Activated B cell treated with CpG ODN at 0.5 μM for 24 hours (primary cell): ENCODE measurements at regions of chr17 and their contacts with region 1.

Region 1: GRCh38 chr17:42798383-42799380 is at the starts of genes CNTD1 and COA3:
- DNase-seq: peak; percentile 69
- ATAC-seq: peak; percentile 100
- H3K4me3 Mint-ChIP-seq: peak within 1 kb of the TSS; percentile 97
- H3K27ac Mint-ChIP-seq: peak within 1 kb of the TSS; percentile 81
- H3K4me1 Mint-ChIP-seq: peaks cover 28% of the 10 kb centered on the region
- H3K27me3 Mint-ChIP-seq: no peaks in the 10 kb centered on the region
- CTCF ChIP-seq: no peak
- total RNA-seq, gene CNTD1: not detected in 2 replicates
- total RNA-seq, gene COA3: 41.4 and 48.0 TPM in 2 replicates

Region 2: DNA sequence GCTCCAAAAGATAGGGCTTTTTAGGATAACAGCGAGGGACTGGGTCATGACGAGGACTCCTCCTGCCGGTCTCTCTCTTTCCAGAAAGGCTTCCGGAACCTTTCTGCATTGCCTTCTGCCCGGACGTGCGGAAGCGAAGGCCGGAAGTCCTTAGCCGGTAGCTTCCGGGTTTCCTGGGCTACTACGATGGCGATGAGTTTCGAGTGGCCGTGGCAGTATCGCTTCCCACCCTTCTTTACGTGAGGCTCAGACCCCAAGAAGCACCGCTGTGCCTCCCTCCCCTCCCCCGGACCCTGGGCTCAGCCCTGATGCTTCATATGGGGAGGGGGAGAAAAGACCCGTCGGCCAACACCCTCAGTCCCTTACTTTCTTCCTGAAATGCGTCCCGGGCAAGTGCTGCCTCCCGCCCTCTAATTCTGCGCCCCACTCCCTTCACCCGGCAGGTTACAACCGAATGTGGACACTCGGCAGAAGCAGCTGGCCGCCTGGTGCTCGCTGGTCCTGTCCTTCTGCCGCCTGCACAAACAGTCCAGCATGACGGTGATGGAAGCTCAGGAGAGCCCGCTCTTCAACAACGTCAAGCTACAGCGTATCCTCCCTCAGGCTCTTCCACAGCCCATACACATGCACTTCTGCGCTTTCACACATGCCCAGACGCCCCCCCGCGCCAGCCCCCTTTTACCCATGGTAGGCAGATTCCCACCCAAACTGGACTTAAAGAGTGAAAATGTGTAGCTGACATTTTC is 25.2 kb before region 1 on chr17 and contains the start of gene VPS25:
- CTCF ChIA-PET with region 1: no interaction called
- POLR2A ChIA-PET with region 1: interaction called, 9 read pairs
- intact Hi-C with region 1: loop called (anchors 1 kb)
- DNase-seq: peak; percentile 71
- ATAC-seq: peak; percentile 92
- H3K4me3 Mint-ChIP-seq: peak within 1 kb of the TSS; percentile 98
- H3K27ac Mint-ChIP-seq: peak within 1 kb of the TSS; percentile 96
- H3K4me1 Mint-ChIP-seq: peaks cover 35% of the 10 kb centered on the region
- H3K27me3 Mint-ChIP-seq: no peaks in the 10 kb centered on the region
- CTCF ChIP-seq: no peak
- total RNA-seq, gene VPS25: 49.7 and 49.8 TPM in 2 replicates